ENCODE measurements at regions of chr10 and their contacts with region 1.

Region 1: DNA sequence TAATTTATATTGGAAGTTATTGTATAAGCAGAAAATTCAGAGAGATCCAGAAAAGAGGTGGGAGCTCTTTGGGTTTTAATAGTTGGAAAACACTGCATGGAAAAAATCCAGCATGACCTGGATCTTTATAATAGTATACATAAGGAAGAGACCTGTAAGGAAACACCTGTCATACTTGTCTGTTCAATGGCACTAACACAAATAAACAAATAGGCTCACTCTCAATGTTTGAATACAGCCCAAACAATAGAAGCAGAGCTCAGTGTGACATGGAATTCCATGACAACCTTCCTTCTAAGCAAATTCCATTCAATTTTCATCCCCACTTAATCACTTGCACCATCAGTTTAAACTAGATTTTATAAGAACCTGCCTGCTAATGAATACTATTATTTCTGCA is 31.7 kb downstream of the CISD1 start:
- DNase-seq: no peak
- H3K4me3 ChIP-seq: no peak overlapping the region
- H3K27ac ChIP-seq: no peak overlapping the region
- H3K4me1 ChIP-seq: peaks cover 0 to 7% (median 6%) of the 10 kb centered on the region in 6 donors
- H3K27me3 ChIP-seq: peaks cover 0 to 7% (median 0%) of the 10 kb centered on the region in 7 donors
- CTCF ChIP-seq: no peak
- POLR2A ChIP-seq: no peak

Region 2: DNA sequence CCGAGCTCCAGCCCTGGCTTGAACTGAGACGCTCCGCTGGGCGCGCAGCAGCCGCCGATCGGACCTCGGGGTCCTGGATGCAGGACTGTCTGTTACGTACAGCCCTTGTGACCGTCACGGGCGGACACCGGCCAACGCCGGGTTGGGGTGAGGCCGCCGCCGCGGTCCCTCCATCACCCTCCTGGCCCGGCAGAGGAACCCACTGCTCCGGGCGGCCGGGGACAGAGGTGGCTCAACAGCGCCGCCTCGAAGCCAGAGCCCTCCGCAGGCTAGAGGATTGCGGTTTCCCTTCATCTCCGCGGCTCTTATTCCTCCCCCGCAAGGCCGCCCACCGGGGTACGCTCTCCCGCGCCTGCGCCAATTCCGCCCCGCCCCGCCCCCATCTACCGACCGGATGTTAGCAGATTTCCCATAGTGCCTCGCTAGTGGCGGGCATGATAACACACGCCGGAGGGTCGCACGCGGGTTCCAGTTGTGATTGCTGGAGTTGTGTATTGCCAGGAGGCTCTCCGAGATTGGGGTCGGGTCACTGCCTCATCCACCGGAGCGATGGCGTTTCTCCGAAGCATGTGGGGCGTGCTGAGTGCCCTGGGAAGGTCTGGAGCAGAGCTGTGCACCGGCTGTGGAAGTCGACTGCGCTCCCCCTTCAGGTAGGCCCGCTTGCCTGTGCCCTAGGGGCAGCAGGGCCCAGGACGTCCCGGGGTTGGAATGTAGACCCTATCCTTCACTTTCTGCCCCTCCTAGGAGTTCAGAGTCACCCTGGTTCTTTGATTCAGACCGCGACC is 84.5 kb after region 1 on chr10 and contains the start of gene TFAM:
- intact Hi-C with region 1: loop called (anchors 10 kb)
- DNase-seq: peak; percentile 99
- H3K4me3 ChIP-seq: peak within 1 kb of the TSS; percentile 74 to 90 (median 82)
- H3K27ac ChIP-seq: peak within 1 kb of the TSS; percentile 88 to 97 (median 93)
- H3K4me1 ChIP-seq: peaks cover 18 to 72% (median 32%) of the 10 kb centered on the region in 6 donors
- H3K27me3 ChIP-seq: no peaks in the 10 kb centered on the region
- CTCF ChIP-seq: peak in 10 of 11 experiments; percentile 53 to 81 (median 66)
- POLR2A ChIP-seq: peak in 2 of 3 donors; percentile 83 to 88
- total RNA-seq, gene TFAM: 20.7 to 39.2 (median 37.0) TPM

Region 3: GRCh38 chr10:58414270-58415041 is 113.8 kb after region 1 on chr10:
- intact Hi-C with region 1: no loop called
- DNase-seq: no peak
- H3K4me3 ChIP-seq: no peak overlapping the region
- H3K27ac ChIP-seq: no peak overlapping the region
- H3K4me1 ChIP-seq: no peaks in the 10 kb centered on the region
- H3K27me3 ChIP-seq: no peaks in the 10 kb centered on the region
- CTCF ChIP-seq: no peak
- POLR2A ChIP-seq: no peak

Measured in spleen (tissue), 13 donors.